ENCODE measurements at regions of chr2 and their contacts with region 1.

Region 1: GRCh38 chr2:223993621-223994232 is 36.5 kb downstream of the MRPL44 start:
- DNase-seq: peak; percentile 46
- H3K4me3 Mint-ChIP-seq: no peak overlapping the region
- H3K27ac Mint-ChIP-seq: no peak overlapping the region
- H3K4me1 Mint-ChIP-seq: peaks cover 18% of the 10 kb centered on the region
- H3K27me3 Mint-ChIP-seq: no peaks in the 10 kb centered on the region

Region 2: DNA sequence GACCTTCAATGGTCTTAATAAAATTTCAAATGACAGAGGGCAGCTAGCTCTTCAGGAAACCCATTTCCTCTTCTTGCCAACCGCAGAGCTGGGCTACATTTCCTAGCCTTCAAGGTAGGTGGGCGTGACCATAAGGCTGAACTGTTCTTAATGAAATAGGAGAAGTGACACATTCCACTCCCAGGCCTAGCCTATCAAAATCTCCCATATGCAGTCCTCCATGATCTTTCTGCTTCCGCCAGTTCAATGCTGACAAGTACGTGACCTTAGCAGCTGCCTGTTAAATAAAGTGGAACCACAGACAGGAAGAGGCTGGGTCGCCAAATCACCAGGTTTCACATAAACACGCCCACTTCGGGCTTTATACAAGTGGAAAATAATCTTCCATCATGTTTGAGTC is 32.1 kb after region 1 on chr2:
- intact Hi-C with region 1: loop called (anchors 2 kb)
- DNase-seq: peak; percentile 65
- H3K4me3 Mint-ChIP-seq: peak overlapping the region; percentile 51
- H3K27ac Mint-ChIP-seq: peak overlapping the region; percentile 87
- H3K4me1 Mint-ChIP-seq: peaks cover 77% of the 10 kb centered on the region
- H3K27me3 Mint-ChIP-seq: no peaks in the 10 kb centered on the region

Region 3: DNA sequence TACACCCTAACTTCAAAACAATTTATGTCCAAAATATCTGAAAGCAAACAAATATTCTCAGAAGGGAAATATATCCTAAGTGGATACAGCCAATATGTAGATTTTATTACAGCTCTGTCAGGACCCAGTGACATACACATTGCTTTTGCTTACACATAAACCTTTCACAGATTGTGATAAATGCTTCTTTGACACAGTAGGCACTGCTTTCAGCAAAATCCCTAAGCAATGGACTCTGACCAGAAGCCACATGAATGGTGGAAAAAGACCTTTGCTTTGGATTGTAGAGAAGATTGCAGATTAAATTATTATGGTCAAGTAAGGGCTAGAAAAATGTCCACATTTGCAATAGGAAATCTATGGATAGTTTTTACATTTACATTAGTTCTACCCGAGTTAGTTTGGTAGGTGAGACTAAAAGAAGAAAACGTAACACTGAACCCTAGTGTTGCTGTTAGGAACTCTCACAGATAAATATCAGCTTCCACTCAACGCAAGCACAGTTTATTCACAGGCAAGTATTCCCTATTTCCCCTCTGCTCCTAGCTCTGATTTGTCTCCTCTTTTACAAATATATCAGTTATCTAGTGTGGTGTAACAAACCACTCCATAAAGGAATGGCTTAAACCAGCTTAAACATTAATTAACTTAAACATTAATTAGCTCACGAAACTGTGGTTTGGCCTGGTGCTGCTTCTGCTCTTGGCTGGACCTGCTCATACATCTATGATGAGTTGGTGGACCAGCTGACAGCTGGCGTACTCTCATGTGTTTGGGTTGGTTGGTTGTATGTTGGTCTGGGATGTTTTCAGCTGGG is 69.0 kb after region 1 on chr2:
- intact Hi-C with region 1: loop called (anchors 1 kb)
- DNase-seq: no peak
- H3K4me3 Mint-ChIP-seq: no peak overlapping the region
- H3K27ac Mint-ChIP-seq: no peak overlapping the region
- H3K4me1 Mint-ChIP-seq: no peaks in the 10 kb centered on the region
- H3K27me3 Mint-ChIP-seq: peaks cover 6% of the 10 kb centered on the region

Region 4: GRCh38 chr2:224171226-224171625 is 177.5 kb after region 1 on chr2:
- intact Hi-C with region 1: loop called (anchors 5 kb)
- DNase-seq: no peak
- H3K4me3 Mint-ChIP-seq: no peak overlapping the region
- H3K27ac Mint-ChIP-seq: no peak overlapping the region
- H3K4me1 Mint-ChIP-seq: no peaks in the 10 kb centered on the region
- H3K27me3 Mint-ChIP-seq: peaks cover 2% of the 10 kb centered on the region

Region 5: DNA sequence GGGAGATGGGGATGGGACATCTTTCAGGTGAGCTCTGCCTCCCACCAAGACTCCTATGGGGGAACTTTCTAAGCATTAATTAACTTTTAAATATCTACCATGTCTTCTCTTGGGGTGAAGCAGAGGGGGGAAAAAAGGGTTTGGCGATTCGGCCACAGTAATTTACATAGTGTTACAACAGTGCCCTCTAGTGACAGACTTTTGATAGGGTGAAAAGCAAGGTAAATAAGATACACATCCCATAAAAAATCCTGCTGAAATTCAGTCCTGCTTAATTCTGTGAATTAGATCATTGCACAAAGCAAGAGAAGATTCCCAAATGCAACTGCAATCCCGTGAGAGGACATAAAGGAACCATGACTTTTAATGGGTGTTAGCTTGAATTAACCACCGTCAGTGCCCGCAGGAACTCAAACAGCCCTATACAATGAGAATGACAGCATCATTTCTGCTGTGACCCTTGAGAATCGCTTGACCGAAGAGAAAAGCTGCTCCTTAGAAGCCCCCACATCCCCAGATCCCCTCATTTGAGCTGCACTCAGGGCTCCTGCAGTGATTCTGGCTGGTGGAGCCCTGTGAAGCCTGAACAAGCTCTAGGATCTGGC is 375.4 kb after region 1 on chr2:
- intact Hi-C with region 1: loop called (anchors 1 kb)
- DNase-seq: no peak
- H3K4me3 Mint-ChIP-seq: no peak overlapping the region
- H3K27ac Mint-ChIP-seq: no peak overlapping the region
- H3K4me1 Mint-ChIP-seq: no peaks in the 10 kb centered on the region
- H3K27me3 Mint-ChIP-seq: peaks cover 8% of the 10 kb centered on the region